ENCODE measurements at regions of chr17 and their contacts with region 1.

Region 1: DNA sequence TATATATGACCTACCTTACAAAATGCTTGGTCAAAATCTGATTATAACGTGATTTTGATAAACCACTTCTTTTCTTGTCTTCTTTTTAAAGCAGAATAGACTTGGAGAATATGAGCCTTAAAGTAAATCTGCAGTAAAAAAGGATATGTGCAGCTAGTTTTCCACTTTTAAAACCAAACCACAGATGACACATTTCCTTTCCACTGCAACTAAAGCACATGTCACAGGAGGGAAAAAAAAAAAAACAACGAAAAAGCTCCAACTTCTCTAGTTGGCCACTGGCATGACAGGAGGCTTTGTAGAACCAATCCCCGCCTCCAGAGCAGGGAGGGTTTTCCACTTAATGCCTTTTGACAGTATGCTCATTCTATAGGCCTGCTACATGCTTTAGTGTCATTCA is at the start of gene EVI2A:
- DNase-seq: peak; percentile 87
- H3K4me3 Mint-ChIP-seq: peak within 1 kb of the TSS; percentile 75
- H3K27ac Mint-ChIP-seq: peak within 1 kb of the TSS; percentile 92
- H3K4me1 Mint-ChIP-seq: peaks cover 35% of the 10 kb centered on the region
- H3K27me3 Mint-ChIP-seq: no peaks in the 10 kb centered on the region
- total RNA-seq, gene EVI2A: 24.5 to 25.5 TPM

Region 2: DNA sequence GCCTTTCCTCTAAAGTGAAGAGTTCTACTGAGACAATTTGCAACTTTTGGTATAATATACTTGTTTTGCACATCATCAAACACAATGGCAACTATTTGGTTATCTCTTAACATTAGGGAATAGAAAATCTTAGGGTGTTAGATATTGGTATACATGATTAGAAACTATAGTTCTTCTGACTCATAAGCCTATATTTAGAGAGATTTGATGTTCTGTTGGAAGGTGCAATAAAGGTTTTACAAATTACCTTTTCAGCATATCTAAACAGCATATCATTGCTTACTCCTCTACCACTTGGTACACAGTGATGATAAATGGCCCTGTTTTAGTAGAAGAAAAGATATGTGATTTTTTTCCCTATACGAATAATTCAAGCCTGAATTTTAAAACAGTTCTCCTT is 13.8 kb before region 1 on chr17:
- CTCF ChIA-PET with region 1: interaction called, 13 read pairs
- POLR2A ChIA-PET with region 1: interaction called, 106 read pairs
- intact Hi-C with region 1: loop called (anchors 1 kb)
- DNase-seq: no peak
- H3K4me3 Mint-ChIP-seq: peak overlapping the region; percentile 30
- H3K27ac Mint-ChIP-seq: peak overlapping the region; percentile 92
- H3K4me1 Mint-ChIP-seq: peaks cover 62% of the 10 kb centered on the region
- H3K27me3 Mint-ChIP-seq: no peaks in the 10 kb centered on the region

Region 3: DNA sequence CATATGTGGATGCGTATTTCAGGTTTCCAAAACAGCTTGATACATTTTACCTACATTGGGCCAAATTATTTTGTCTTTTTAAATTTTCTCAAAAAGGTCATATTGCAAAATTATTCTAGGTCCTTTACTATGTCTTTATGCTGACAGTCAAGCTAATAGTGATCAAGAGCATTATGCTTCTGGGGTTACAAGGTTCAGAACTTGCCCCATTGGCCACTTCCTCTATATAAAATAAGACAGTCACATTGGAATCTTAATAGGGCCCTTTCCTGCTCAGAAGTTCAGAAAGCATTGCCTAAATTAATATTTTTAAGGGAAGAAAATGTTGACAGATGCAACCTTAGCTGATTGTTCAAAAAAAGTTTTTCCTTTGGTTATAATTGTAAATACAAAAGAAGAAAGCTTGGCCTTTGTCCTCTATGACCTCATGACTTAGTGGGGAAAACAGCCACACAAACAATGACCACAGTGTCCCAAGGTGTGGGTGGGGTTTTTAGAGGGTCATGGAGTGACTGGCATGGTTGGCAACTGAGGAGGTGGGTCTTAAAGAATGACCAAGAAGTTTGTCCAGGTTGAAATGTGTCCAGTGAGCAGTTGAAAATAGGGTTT is 58.2 kb after region 1 on chr17:
- CTCF ChIA-PET with region 1: no interaction called
- POLR2A ChIA-PET with region 1: no interaction called
- intact Hi-C with region 1: no loop called
- DNase-seq: no peak
- H3K4me3 Mint-ChIP-seq: no peak overlapping the region
- H3K27ac Mint-ChIP-seq: no peak overlapping the region
- H3K4me1 Mint-ChIP-seq: no peaks in the 10 kb centered on the region
- H3K27me3 Mint-ChIP-seq: no peaks in the 10 kb centered on the region

Region 4: DNA sequence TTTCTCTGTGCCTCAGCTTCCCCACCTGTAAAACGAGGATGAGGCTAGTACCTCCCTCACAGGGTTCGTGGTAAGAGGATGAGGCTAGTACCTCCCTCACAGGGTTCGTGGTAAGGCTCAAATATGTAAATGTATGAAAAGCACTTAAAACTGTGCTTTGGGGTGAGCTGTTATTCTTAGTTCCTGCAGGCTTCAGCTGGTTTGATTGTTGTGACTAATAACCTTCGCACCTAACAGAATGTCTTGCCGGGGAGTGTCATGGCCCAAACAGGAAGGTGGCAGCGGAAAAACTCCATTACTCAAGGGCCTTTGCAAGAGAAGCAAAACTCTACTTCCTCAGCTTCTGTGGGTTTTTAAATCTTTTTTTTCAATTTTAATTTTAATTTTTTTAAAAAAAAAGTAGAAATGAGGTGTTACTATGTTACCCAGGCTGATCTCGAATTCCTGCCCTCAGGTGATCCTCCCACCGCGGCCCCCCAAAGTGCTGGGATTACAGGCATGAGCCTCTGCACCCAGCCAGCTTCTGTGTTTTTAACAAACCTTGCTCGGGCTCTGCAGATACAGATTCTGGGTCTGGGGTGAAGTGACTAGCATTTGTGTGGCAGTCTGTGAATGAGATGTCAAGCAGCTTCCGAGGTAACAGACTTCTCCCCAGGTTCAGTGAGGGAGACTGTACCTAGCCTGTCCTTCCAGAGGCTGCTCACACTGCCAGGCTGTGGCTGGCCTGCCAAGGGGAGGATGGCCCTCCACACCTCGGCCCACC is 173.0 kb after region 1 on chr17:
- CTCF ChIA-PET with region 1: no interaction called
- POLR2A ChIA-PET with region 1: interaction called, 3 read pairs
- intact Hi-C with region 1: loop called (anchors 5 kb)
- DNase-seq: peak; percentile 83
- H3K4me3 Mint-ChIP-seq: peak overlapping the region; percentile 66
- H3K27ac Mint-ChIP-seq: peak overlapping the region; percentile 96
- H3K4me1 Mint-ChIP-seq: peaks cover 88% of the 10 kb centered on the region
- H3K27me3 Mint-ChIP-seq: no peaks in the 10 kb centered on the region

Measured in activated CD4-positive, alpha-beta memory T cell treated with anti-CD3 and anti-CD28 coated beads for 36 hours (primary cell).